ENCODE measurements at regions of chr12 and their contacts with region 1.

Region 1: DNA sequence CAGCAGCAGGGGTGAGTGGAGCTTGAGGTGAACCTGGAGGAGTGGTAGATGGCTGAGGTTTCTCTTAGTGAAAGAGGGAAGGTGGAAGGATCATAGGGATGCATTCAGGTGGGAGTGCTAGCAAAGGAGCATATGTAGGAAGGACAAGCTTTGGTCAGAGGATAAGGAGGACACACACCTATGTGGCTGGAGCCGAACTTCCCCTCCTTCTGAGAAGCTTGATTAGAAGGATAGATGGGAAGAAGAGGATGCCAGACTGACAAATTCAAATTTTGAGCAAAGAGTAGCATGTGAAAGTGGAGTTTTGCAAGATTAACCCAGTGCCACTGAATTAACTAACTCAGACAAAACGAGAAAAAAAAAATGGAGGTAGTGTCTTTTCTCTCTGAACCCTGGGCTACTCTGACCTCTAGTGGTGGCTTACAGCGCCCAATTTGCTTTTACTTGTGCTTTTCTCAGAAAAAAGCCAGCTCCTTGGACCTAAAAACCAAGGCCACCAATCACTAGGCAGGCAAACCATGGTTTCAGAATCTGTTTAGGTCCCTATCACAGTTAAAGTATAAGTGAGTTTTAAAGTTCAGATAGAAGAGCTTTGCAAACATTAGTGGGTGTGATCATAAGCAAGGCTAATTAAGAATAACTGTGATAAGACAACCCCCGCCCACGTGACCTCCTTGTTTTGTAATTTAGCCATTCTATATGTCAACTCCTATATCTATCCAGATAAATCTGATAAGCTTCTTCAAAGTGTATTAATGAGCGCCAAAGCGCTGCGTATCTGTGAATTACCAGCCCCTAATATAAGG is 15.5 kb downstream of the EMP1 start:
- DNase-seq: peak in 1 of 2 experiments; percentile 73
- H3K4me3 ChIP-seq: no peak overlapping the region
- H3K27ac ChIP-seq: no peak overlapping the region
- H3K4me1 ChIP-seq: peaks cover 3 to 10% (median 5%) of the 10 kb centered on the region in 4 experiments; a peak in 4 of 7 replicates
- H3K27me3 ChIP-seq: no peaks in the 10 kb centered on the region
- CTCF ChIP-seq: peak in 2 of 3 experiments; percentile 77 to 78; a peak in 3 of 4 replicates
- EP300 ChIP-seq: no peak
- POLR2A ChIP-seq: no peak
- RAD21 ChIP-seq: peak; percentile 90

Region 2: GRCh38 chr12:12890815-12891645 is 321.0 kb before region 1 on chr12 and contains the start of gene GPRC5A:
- CTCF ChIA-PET with region 1: interaction called, 12 read pairs
- POLR2A ChIA-PET with region 1: no interaction called
- DNase-seq: peak in 1 of 2 experiments; percentile 75
- H3K4me3 ChIP-seq: peak within 1 kb of the TSS; percentile 59 to 72 (median 66)
- H3K27ac ChIP-seq: no peak within 1 kb of the TSS
- H3K4me1 ChIP-seq: peaks cover 6 to 13% (median 9%) of the 10 kb centered on the region in 4 experiments; a peak in 5 of 7 replicates
- H3K27me3 ChIP-seq: peaks cover 0 to 36% (median 23%) of the 10 kb centered on the region in 4 experiments; a peak in 6 of 7 replicates
- CTCF ChIP-seq: peak; percentile 1 to 15 (median 11); a peak in 2 of 4 replicates
- EP300 ChIP-seq: no peak
- POLR2A ChIP-seq: no peak
- RAD21 ChIP-seq: peak; percentile 6 to 38; a peak in 3 of 4 replicates
- total RNA-seq, gene GPRC5A: 1.0 and 1.5 TPM in 2 replicates

Region 3: DNA sequence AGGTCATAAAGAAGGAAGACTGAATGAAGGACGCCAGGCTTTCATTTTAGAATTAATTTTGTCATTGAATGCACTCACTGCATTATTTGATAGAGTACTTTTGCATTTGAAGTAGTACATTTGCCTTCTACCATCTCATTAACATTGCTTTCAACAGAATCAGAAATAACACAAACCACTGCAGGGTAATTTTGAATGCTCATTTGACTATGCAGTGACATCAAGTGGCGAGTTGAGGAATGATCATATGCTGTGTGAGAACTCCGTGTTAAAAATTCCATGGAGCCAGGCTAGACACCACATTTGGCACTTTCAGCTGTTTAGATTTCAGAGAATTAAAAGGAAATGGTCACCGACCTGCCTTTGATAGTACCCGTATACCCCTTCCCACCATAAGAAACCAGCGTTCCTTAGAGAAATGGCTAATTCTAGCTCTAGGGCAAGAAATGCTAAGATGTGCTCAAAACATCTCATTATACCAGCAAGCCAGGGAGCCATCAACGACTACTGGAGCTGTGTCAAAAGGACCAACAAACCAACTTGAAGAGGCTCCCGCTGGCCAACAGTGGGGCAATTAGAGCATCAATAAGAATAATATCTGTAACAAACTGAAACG is 228.5 kb before region 1 on chr12:
- CTCF ChIA-PET with region 1: interaction called, 102 read pairs
- POLR2A ChIA-PET with region 1: interaction called, 3 read pairs
- DNase-seq: no peak
- H3K4me3 ChIP-seq: no peak overlapping the region
- H3K27ac ChIP-seq: no peak overlapping the region
- H3K4me1 ChIP-seq: peaks cover 0 to 7% (median 2%) of the 10 kb centered on the region in 4 experiments; a peak in 3 of 7 replicates
- H3K27me3 ChIP-seq: no peaks in the 10 kb centered on the region
- CTCF ChIP-seq: peak in 2 of 3 experiments; percentile 52 to 60; a peak in 3 of 4 replicates
- EP300 ChIP-seq: no peak
- POLR2A ChIP-seq: no peak
- RAD21 ChIP-seq: peak; percentile 57 to 65

Region 4: DNA sequence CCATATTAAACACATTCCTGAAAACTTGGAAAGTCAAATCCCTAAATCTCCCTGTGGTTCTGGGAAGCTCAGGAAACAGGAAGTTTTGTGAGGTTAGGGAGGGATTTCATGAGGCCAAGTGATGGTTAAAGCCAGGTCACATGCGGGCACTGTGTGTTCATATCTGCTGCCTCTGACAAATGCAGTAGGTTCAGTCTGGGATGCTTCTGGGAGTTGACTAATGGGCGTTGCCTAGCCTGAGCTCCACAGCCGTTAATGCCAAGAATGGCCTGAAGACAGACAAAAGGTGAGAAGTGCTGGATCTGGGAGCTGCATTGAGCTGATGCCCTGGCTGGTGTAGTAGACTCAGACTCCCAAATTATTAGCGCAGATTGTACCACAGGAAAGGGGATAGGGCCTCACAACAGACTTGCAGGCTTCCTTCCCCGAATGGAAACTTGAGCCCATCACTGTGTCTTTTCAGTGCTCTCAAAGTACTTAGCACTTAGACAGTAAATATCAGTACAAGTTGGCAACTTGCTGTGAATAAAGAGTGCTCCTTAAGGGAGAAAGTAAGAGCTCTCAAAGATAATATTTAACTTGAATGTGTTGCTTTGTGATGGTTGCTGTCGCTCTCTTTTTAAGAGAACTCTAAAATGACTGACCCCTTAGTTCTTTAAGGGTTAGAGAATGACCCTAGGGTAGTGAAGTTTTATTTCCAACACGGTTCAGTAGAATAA is 125.9 kb before region 1 on chr12:
- CTCF ChIA-PET with region 1: interaction called, 39 read pairs
- POLR2A ChIA-PET with region 1: interaction called, 3 read pairs
- DNase-seq: no peak
- H3K4me3 ChIP-seq: no peak overlapping the region
- H3K27ac ChIP-seq: no peak overlapping the region
- H3K4me1 ChIP-seq: peaks cover 20 to 26% (median 24%) of the 10 kb centered on the region in 4 experiments
- H3K27me3 ChIP-seq: no peaks in the 10 kb centered on the region
- CTCF ChIP-seq: no peak
- EP300 ChIP-seq: no peak
- POLR2A ChIP-seq: no peak
- RAD21 ChIP-seq: no peak

Region 5: DNA sequence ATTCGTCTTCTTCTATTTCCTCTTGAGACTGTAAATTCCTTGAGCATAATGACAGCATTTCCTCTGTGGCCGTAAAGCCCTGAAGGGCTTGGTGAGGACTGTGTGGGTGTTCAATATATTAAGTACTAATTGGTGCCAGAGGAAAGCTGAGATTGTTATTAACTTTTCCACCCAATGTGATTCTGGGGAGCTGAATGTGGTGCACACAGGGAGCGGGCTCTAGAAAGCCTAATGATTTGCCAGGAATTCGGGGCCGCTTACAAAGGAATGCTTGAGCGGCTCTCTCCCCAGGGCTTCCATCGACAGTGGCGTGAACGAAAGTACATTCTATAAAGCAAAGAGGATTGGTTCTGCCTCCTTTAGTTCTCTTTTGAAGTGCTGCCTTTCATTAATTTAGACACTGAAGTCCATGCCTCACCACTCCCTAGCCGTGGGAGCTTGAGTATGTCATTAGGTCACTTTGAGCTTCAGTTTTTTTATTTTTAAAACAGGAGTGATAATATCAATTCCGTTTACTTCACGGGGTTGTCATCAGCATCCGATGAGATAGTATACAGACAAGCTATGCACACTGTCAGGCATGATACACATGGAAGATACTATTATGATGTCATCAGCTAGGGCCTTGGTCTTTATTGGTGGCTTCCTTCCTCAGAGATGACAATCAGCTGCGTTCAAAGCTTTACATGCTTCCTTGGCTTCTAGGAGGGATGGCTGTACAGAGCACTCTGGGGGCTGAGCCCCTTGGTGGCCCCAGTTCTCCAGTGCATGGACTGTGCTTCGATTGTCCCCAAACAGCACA is 97.6 kb before region 1 on chr12:
- CTCF ChIA-PET with region 1: interaction called, 17 read pairs
- POLR2A ChIA-PET with region 1: no interaction called
- DNase-seq: no peak
- H3K4me3 ChIP-seq: no peak overlapping the region
- H3K27ac ChIP-seq: no peak overlapping the region
- H3K4me1 ChIP-seq: peaks cover 0 to 13% (median 7%) of the 10 kb centered on the region in 4 experiments; a peak in 6 of 7 replicates
- H3K27me3 ChIP-seq: peaks cover 0 to 3% (median 0%) of the 10 kb centered on the region in 4 experiments; a peak in 1 of 7 replicates
- CTCF ChIP-seq: no peak
- EP300 ChIP-seq: no peak
- POLR2A ChIP-seq: no peak
- RAD21 ChIP-seq: no peak

Region 6: GRCh38 chr12:13196130-13196921 is 15.7 kb before region 1 on chr12 and contains the start of gene EMP1:
- CTCF ChIA-PET with region 1: interaction called, 25 read pairs
- POLR2A ChIA-PET with region 1: interaction called, 4 read pairs
- DNase-seq: no peak
- H3K4me3 ChIP-seq: no peak within 1 kb of the TSS
- H3K27ac ChIP-seq: no peak within 1 kb of the TSS
- H3K4me1 ChIP-seq: peaks cover 1 to 5% (median 3%) of the 10 kb centered on the region in 4 experiments; a peak in 3 of 7 replicates
- H3K27me3 ChIP-seq: no peaks in the 10 kb centered on the region
- CTCF ChIP-seq: no peak
- EP300 ChIP-seq: no peak
- POLR2A ChIP-seq: no peak
- RAD21 ChIP-seq: no peak
- total RNA-seq, gene EMP1: 0.57 and 0.65 TPM in 2 replicates

Region 7: DNA sequence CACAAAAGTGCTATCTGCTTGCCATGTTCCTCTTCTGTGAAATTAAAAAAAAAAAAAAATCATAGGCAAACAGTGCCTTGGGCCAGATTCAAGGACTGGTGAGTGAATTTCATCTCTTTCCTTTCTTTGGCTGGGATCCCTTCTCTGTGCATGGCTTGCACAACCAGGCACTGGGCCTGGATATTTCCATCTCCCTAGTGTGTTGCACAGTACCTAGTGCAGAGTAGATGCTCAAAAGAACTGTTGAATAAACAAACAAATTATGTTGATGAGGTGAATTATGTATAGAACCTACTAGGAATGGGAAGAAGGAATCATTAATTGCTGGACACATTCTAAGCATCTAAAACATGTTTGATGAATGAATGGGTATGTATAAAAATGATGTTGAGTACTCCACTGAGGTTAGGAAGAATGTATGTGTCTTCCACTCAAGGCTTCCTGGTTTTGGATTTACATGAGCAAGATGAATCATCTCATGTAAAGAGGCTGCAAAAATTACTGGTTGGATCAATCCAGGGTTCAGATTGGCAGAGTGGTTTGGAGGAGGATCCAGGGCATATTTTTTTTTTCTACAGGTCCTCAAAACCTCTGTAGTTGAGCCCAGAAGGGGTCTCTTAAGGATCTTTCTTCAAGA is 77.7 kb after region 1 on chr12:
- CTCF ChIA-PET with region 1: no interaction called
- POLR2A ChIA-PET with region 1: no interaction called
- DNase-seq: no peak
- H3K4me3 ChIP-seq: no peak overlapping the region
- H3K27ac ChIP-seq: no peak overlapping the region
- H3K4me1 ChIP-seq: no peaks in the 10 kb centered on the region
- H3K27me3 ChIP-seq: no peaks in the 10 kb centered on the region
- CTCF ChIP-seq: no peak
- EP300 ChIP-seq: no peak
- POLR2A ChIP-seq: no peak
- RAD21 ChIP-seq: no peak

Region 8: GRCh38 chr12:13337791-13338190 is 125.7 kb after region 1 on chr12:
- CTCF ChIA-PET with region 1: no interaction called
- POLR2A ChIA-PET with region 1: no interaction called
- DNase-seq: no peak
- H3K4me3 ChIP-seq: no peak overlapping the region
- H3K27ac ChIP-seq: no peak overlapping the region
- H3K4me1 ChIP-seq: no peaks in the 10 kb centered on the region
- H3K27me3 ChIP-seq: 0 out of 7 replicates have a peak, but pooled peaks cover 0 to 5% (median 0%) of the 10 kb centered on the region in 4 experiments
- CTCF ChIP-seq: no peak
- EP300 ChIP-seq: no peak
- POLR2A ChIP-seq: no peak
- RAD21 ChIP-seq: no peak

Region 9: GRCh38 chr12:13358391-13358905 is 146.4 kb after region 1 on chr12:
- CTCF ChIA-PET with region 1: no interaction called
- POLR2A ChIA-PET with region 1: no interaction called
- DNase-seq: peak in 1 of 2 experiments; percentile 33
- H3K4me3 ChIP-seq: no peak overlapping the region
- H3K27ac ChIP-seq: no peak overlapping the region
- H3K4me1 ChIP-seq: no peaks in the 10 kb centered on the region
- H3K27me3 ChIP-seq: no peaks in the 10 kb centered on the region
- CTCF ChIP-seq: no peak
- EP300 ChIP-seq: no peak
- POLR2A ChIP-seq: no peak
- RAD21 ChIP-seq: no peak

Measured in H1 (cell line).